ENCODE measurements at regions of chr10 and their contacts with region 1.

Region 1: GRCh38 chr10:96513698-96514561 is at the start of gene TLL2:
- DNase-seq: peak; percentile 87
- H3K4me3 Mint-ChIP-seq: peak within 1 kb of the TSS; percentile 54
- H3K27ac Mint-ChIP-seq: no peak within 1 kb of the TSS
- H3K4me1 Mint-ChIP-seq: peaks cover 8% of the 10 kb centered on the region
- H3K27me3 Mint-ChIP-seq: no peaks in the 10 kb centered on the region
- CTCF ChIP-seq: peak; percentile 30
- total RNA-seq, gene TLL2: 0.20 TPM in 1 of 2 replicates, not detected in the other

Region 2: DNA sequence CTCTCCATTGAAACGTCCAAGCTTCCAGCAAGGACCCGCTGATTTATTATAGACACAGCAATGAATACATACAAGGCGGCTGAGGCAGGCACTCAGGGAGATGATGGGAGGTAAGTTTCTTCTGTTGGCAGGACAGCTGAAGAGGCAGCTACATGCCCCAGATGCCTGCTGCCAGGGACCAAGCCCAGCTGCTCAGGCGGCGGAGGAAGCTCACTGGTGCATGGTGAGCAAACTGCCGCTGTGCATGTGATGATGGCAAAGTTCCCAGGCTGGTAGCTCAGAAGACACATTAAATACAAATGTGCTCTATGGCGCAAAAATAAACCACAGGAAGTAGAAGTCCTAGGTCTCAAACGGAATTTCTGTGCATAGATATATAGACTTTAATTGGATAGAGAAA is 207.4 kb before region 1 on chr10:
- CTCF ChIA-PET with region 1: no interaction called
- POLR2A ChIA-PET with region 1: no interaction called
- intact Hi-C with region 1: no loop called
- DNase-seq: no peak
- H3K4me3 Mint-ChIP-seq: no peak overlapping the region
- H3K27ac Mint-ChIP-seq: no peak overlapping the region
- H3K4me1 Mint-ChIP-seq: no peaks in the 10 kb centered on the region
- H3K27me3 Mint-ChIP-seq: peaks cover 13% of the 10 kb centered on the region
- CTCF ChIP-seq: no peak

Region 3: DNA sequence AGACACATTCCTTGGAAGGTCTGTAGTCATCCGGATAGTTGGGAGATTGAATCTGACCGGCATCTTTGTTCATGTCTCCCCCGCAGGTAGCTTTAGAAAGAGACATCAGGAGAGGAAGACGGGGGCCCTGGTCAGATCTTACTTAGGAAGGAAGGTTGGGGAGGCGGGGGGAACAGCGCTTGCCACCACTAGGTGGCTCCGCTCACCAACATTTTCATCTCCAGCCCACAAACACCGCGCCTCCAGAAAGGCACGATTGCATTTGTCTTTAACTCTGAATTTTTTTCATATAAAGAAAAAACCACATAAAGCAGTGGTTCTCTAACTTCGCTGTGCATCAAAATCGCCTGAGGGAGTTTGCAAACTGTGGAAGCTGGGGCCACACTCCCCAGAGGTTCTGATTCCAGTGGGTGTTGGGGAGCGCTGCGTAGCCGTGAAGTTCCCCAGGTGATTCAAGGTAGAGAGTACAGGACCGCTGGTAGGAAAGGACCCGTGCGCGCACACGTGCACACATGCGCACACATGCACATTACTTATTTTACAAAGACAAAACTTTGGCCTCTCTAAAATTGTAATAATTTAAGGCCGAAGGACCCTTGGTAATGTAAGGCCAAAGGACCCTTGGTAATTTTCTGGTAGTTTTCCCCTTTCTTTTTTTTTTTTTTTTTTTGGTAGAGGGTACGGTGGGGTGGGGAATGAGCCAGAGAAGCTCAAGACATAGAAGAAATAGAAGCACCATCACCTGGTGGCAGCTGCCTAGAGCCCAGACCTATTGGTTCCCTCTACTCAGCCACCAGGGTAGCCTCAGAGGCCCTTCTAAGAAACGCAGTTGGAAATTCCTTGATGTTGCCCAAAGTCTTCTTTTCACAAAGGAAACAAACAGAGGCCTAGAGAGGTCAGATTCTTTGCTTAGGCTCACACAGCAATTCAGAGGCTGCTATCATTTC is 117.7 kb before region 1 on chr10:
- CTCF ChIA-PET with region 1: interaction called, 73 read pairs
- POLR2A ChIA-PET with region 1: no interaction called
- intact Hi-C with region 1: loop called (anchors 1 kb)
- DNase-seq: peak; percentile 65
- H3K4me3 Mint-ChIP-seq: no peak overlapping the region
- H3K27ac Mint-ChIP-seq: no peak overlapping the region
- H3K4me1 Mint-ChIP-seq: no peaks in the 10 kb centered on the region
- H3K27me3 Mint-ChIP-seq: peaks cover 71% of the 10 kb centered on the region
- CTCF ChIP-seq: peak; percentile 76

Region 4: GRCh38 chr10:96491299-96491698 is 22.6 kb before region 1 on chr10:
- CTCF ChIA-PET with region 1: interaction called, 31 read pairs
- POLR2A ChIA-PET with region 1: interaction called, 5 read pairs
- intact Hi-C with region 1: no loop called
- DNase-seq: peak; percentile 41
- H3K4me3 Mint-ChIP-seq: no peak overlapping the region
- H3K27ac Mint-ChIP-seq: no peak overlapping the region
- H3K4me1 Mint-ChIP-seq: no peaks in the 10 kb centered on the region
- H3K27me3 Mint-ChIP-seq: peaks cover 50% of the 10 kb centered on the region
- CTCF ChIP-seq: peak; percentile 11

Region 5: GRCh38 chr10:96501985-96502384 is 11.9 kb before region 1 on chr10:
- CTCF ChIA-PET with region 1: interaction called, 36 read pairs
- POLR2A ChIA-PET with region 1: interaction called, 13 read pairs
- intact Hi-C with region 1: no loop called
- DNase-seq: peak; percentile 94
- H3K4me3 Mint-ChIP-seq: no peak overlapping the region
- H3K27ac Mint-ChIP-seq: peak overlapping the region; percentile 21
- H3K4me1 Mint-ChIP-seq: peaks cover 14% of the 10 kb centered on the region
- H3K27me3 Mint-ChIP-seq: no peaks in the 10 kb centered on the region
- CTCF ChIP-seq: no peak

Region 6: DNA sequence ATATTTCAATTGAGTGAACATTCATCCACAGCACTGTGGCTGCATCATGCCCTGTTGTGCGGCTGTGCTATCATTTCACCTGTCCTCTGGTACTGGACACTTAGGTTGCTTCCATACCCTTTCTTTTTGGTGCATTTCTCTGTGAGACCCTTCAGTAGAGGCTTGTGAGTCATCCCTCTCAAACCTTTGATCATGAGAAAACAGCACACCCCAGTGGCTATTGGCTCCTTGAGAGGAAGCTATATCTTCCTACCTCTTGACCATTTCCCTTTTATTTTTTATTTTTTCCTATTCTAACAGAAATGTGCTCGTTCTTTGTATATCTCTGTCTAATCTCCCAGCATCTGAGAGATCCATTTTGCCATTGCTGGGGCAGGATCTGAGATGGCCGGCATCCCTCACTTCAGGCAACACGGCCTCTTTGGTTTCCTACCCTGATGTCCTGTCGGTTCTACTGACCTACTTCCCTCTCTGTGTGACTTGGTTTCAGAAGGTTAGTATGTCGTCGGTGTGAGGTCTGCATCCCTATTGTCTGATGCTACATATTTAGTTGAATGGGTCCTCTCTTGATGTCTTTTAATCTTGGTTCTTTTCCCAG is 230.2 kb after region 1 on chr10:
- CTCF ChIA-PET with region 1: no interaction called
- POLR2A ChIA-PET with region 1: no interaction called
- intact Hi-C with region 1: loop called (anchors 5 kb)
- DNase-seq: peak; percentile 22
- H3K4me3 Mint-ChIP-seq: no peak overlapping the region
- H3K27ac Mint-ChIP-seq: no peak overlapping the region
- H3K4me1 Mint-ChIP-seq: no peaks in the 10 kb centered on the region
- H3K27me3 Mint-ChIP-seq: no peaks in the 10 kb centered on the region
- CTCF ChIP-seq: peak; percentile 25